ENCODE measurements at regions of chr5 and their contacts with region 1.

Region 1: DNA sequence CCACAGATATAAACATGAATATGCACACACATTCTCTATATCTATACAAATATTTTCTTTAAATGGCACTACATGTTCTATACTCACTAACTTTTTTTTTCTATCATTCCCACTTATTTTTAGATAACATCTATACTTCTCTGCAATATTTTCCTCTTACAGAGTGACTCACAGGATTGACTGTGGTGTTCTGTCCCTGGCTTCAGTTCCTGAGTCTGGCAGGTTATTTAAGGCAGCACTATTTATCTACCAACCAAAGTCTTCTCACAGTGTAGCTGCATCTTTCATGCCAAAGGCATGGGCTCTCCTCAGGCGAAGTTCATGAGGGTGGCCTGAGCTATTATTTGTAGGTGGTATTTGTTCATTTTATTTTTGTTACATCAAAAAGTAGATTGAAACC is 409.0 kb downstream of the PRR16 start:
- DNase-seq: no peak
- H3K4me3 ChIP-seq: no peak overlapping the region
- H3K27ac ChIP-seq: no peak overlapping the region
- H3K4me1 ChIP-seq: no peaks in the 10 kb centered on the region
- H3K27me3 ChIP-seq: no peaks in the 10 kb centered on the region
- CTCF ChIP-seq: no peak
- POLR2A ChIP-seq: no peak

Region 2: DNA sequence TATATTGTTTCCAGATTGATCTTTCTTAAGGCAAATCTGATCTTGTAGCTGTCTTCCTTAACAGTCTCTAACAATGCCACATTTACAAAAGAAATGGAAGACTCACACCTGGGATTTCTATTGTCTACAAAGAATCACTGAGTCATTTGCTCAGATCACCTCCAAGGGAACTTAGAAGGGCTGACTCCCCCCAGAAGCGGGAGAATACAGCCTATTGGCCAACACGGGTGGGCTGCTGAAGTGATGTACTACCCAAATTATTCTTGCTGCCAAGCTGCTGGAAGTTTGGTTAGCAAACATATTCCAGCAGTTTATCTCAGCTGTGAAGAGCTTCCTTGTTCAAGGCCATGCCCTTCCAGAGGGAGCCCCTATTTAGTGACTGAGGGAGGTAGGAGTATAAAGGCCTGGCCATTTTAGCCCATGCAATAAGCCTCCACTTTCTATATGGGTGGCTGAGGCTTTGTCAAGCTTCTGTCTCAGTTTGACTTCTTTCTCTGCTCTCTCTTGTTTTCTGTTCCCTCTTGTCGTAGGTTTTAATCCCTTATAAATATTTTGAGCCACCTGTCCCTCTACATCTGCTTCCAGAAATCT is 29.6 kb before region 1 on chr5:
- intact Hi-C with region 1: loop called (anchors 2 kb)
- DNase-seq: no peak
- H3K4me3 ChIP-seq: no peak overlapping the region
- H3K27ac ChIP-seq: no peak overlapping the region
- H3K4me1 ChIP-seq: no peaks in the 10 kb centered on the region
- H3K27me3 ChIP-seq: no peaks in the 10 kb centered on the region
- CTCF ChIP-seq: no peak
- POLR2A ChIP-seq: no peak

Region 3: GRCh38 chr5:120923026-120923425 is 49.9 kb after region 1 on chr5:
- intact Hi-C with region 1: loop called (anchors 5 kb)
- DNase-seq: no peak
- H3K4me3 ChIP-seq: no peak overlapping the region
- H3K27ac ChIP-seq: no peak overlapping the region
- H3K4me1 ChIP-seq: no peaks in the 10 kb centered on the region
- H3K27me3 ChIP-seq: no peaks in the 10 kb centered on the region
- CTCF ChIP-seq: no peak
- POLR2A ChIP-seq: no peak